ENCODE measurements at regions of chr2 and their contacts with region 1.

Region 1: DNA sequence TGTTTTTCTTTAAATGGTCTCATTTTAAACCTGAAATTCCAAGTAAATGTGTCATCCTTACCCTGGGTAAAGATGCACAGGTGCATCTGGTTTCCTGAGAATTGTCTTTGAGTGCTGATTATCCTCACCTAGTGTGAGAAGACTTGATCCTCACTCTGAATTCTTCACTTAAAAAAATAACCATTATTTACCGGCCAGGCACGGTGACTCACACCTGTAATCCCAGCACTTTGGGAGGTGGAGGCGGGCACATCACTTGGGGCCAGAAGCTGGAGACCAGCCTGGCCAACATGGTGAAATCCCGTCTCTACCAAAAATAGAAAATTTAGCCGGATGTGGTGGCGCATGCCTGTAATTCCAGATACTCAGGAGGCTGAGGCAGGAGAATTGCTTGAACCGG is 9.9 kb upstream of the WNT6 start:
- ATAC-seq: no peak
- H3K4me3 ChIP-seq: no peak overlapping the region
- H3K27ac ChIP-seq: no peak overlapping the region
- H3K4me1 ChIP-seq: no peaks in the 10 kb centered on the region

Region 2: DNA sequence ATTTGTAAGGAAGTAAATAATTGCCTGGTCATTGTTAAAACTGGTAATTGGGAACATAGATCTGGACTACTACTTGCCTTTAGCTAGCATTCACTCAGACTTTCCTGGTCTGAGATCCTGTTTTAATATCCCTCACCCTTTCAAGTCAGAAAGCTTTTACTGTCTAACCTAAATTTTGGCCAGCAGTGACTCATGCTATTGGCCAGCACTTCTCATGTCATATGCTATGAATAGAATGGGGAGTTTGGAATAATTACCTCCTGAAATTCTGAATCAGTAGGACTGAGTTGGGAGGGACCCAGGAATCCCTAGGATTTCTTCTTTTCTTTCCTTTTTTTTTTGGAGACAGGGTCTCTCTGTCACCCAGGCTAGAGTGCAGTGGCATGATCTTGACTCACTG is 158.5 kb before region 1 on chr2:
- in situ Hi-C with region 1: no loop called
- ATAC-seq: peak in 2 of 8 experiments; percentile 88 to 89
- H3K4me3 ChIP-seq: no peak overlapping the region
- H3K27ac ChIP-seq: no peak overlapping the region
- H3K4me1 ChIP-seq: no peaks in the 10 kb centered on the region

Region 3: GRCh38 chr2:218727502-218728165 is 122.1 kb before region 1 on chr2:
- in situ Hi-C with region 1: loop called in 2 of 9 experiments (anchors 10 to 25 kb)
- ATAC-seq: no peak
- H3K4me3 ChIP-seq: no peak overlapping the region
- H3K27ac ChIP-seq: no peak overlapping the region
- H3K4me1 ChIP-seq: peaks cover 0 to 4% of the 10 kb centered on the region in 2 donors

Region 4: DNA sequence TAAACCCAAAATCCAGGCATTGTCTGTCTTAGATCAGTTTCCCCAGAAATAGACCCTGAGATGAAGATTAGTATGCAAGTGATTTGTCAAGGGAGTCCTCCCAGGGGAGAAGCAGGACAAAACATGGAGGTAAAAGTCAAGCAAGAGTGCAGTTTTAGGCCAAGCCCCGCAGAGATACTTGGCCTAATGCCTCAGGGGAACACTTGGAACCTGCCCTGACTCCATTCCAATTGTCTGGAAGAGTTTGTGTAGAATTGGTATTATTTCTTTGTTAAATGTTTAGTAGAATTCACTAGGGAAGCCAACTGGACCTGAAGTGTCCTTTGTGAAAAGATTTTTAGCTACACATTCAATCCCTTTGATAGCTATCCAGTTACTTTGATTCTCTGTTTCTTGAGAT is 65.3 kb after region 1 on chr2:
- in situ Hi-C with region 1: no loop called
- ATAC-seq: no peak
- H3K4me3 ChIP-seq: no peak overlapping the region
- H3K27ac ChIP-seq: no peak overlapping the region
- H3K4me1 ChIP-seq: no peaks in the 10 kb centered on the region